Activated CD4-positive, alpha-beta memory T cell treated with anti-CD3 and anti-CD28 coated beads for 36 hours (primary cell): ENCODE measurements at regions of chr11 and their contacts with region 1.

Region 1: GRCh38 chr11:8744423-8744822 is 61.8 kb downstream of the RPL27A start:
- DNase-seq: no peak
- H3K4me3 Mint-ChIP-seq: no peak overlapping the region
- H3K27ac Mint-ChIP-seq: no peak overlapping the region
- H3K4me1 Mint-ChIP-seq: peaks cover 6% of the 10 kb centered on the region
- H3K27me3 Mint-ChIP-seq: peaks cover 11% of the 10 kb centered on the region

Region 2: GRCh38 chr11:8192016-8192895 is 552.2 kb before region 1 on chr11:
- CTCF ChIA-PET with region 1: no interaction called
- POLR2A ChIA-PET with region 1: no interaction called
- intact Hi-C with region 1: no loop called
- DNase-seq: peak; percentile 56
- H3K4me3 Mint-ChIP-seq: no peak overlapping the region
- H3K27ac Mint-ChIP-seq: no peak overlapping the region
- H3K4me1 Mint-ChIP-seq: no peaks in the 10 kb centered on the region
- H3K27me3 Mint-ChIP-seq: peaks cover 19% of the 10 kb centered on the region

Region 3: GRCh38 chr11:8338138-8338537 is 406.3 kb before region 1 on chr11:
- CTCF ChIA-PET with region 1: no interaction called
- POLR2A ChIA-PET with region 1: no interaction called
- intact Hi-C with region 1: loop called (anchors 5 kb)
- DNase-seq: peak; percentile 44
- H3K4me3 Mint-ChIP-seq: no peak overlapping the region
- H3K27ac Mint-ChIP-seq: no peak overlapping the region
- H3K4me1 Mint-ChIP-seq: peaks cover 3% of the 10 kb centered on the region
- H3K27me3 Mint-ChIP-seq: peaks cover 5% of the 10 kb centered on the region